Activated CD4-positive, alpha-beta T cell treated with anti-CD3 and anti-CD28 coated beads for 36 hours (primary cell): ENCODE measurements at regions of chr3 and their contacts with region 1.

Region 1: DNA sequence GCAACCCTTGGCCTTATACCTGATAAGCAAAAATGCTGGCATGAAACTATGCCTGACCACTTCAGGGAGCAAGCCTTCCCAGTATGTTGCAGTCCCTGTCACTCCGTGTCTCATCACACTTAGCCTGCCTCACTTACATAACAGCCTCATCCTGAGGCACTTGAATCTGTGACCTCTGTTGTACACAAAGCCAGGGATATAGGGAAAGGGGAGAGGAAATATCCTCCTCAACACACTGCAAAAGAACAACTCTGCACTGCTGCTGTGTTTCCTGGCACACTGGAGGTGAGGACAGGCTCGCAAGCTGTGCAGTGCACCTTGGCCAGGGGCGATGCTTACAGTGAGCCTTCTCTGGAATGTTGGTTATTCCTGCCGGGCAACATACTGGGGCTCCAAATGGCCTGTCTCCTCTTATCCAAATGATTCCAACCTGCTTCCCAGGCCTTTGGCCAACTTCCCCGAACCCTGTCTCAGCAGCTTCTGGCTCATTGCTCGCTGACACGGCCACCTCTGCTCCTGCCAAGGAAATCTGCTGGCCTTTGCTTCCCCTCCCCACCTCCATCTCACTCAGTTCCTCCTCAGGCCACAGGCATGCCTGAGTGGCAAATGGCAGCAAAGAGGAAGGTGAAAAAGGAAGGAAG is 109.2 kb downstream of the CD47 start:
- DNase-seq: no peak
- ATAC-seq: no peak
- H3K4me3 Mint-ChIP-seq: no peak overlapping the region
- H3K27ac Mint-ChIP-seq: no peak overlapping the region
- H3K4me1 Mint-ChIP-seq: peaks cover 47% of the 10 kb centered on the region
- H3K27me3 Mint-ChIP-seq: no peaks in the 10 kb centered on the region

Region 2: DNA sequence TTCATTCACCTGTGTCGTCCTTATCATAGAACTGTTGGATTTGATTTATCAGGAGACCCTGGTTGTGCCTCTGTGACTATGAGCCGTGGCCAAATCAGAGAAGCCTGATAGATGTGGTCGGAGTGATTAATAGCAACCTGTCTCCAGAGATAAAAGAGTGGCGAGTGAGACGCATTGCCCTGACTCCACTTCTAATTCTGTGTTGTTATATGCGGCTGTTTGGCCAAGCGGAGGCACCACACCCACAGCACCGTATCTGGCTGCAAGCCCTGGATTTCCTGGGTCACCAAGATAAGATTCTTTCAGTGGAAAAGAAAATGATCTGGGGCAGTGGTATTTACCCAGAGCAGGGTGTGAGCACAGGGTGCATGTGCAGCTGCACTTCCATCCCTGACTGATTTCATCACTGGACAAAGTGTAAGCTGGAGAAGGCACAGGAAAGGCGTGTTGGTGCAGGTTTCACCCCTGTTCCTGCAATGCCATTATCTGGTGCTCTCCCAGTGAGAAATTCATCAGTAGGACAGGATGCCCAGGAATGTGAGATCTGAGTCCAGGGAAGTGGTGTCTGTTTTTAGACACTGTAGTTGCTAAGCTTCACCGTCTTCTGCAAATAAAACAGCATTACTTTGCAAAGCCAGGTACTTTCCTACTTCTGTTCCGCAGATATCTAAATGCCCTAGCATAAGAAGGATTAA is 24.6 kb after region 1 on chr3:
- CTCF ChIA-PET with region 1: no interaction called
- POLR2A ChIA-PET with region 1: no interaction called
- intact Hi-C with region 1: no loop called
- DNase-seq: no peak
- ATAC-seq: no peak
- H3K4me3 Mint-ChIP-seq: no peak overlapping the region
- H3K27ac Mint-ChIP-seq: no peak overlapping the region
- H3K4me1 Mint-ChIP-seq: peaks cover 4% of the 10 kb centered on the region
- H3K27me3 Mint-ChIP-seq: peaks cover 5% of the 10 kb centered on the region

Region 3: GRCh38 chr3:108079877-108080659 is 98.5 kb after region 1 on chr3:
- CTCF ChIA-PET with region 1: no interaction called
- POLR2A ChIA-PET with region 1: no interaction called
- intact Hi-C with region 1: no loop called
- DNase-seq: no peak
- ATAC-seq: peak; percentile 71
- H3K4me3 Mint-ChIP-seq: peak overlapping the region; percentile 23
- H3K27ac Mint-ChIP-seq: peak overlapping the region; percentile 23
- H3K4me1 Mint-ChIP-seq: peaks cover 26% of the 10 kb centered on the region
- H3K27me3 Mint-ChIP-seq: no peaks in the 10 kb centered on the region

Region 4: DNA sequence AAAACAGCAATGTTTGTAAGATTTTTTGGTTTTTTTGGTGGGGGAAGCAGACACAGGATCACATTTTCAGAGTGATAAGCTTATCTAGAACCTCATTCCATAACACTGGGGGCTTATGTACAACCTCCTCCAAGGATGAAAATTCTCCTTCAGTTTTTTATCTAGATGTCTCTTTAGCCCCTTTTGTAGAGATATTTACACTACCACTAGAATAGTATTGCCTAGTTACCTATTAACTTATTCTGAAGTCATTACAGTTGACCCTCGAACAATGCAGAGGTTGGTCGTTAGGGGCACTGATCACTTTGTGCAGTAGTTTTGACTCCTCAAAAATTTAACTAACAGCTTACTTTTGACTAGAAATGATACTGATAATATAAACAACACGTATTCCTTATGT is 207.8 kb after region 1 on chr3:
- CTCF ChIA-PET with region 1: no interaction called
- POLR2A ChIA-PET with region 1: interaction called, 13 read pairs
- intact Hi-C with region 1: no loop called
- DNase-seq: no peak
- ATAC-seq: no peak
- H3K4me3 Mint-ChIP-seq: no peak overlapping the region
- H3K27ac Mint-ChIP-seq: no peak overlapping the region
- H3K4me1 Mint-ChIP-seq: no peaks in the 10 kb centered on the region
- H3K27me3 Mint-ChIP-seq: no peaks in the 10 kb centered on the region